ENCODE measurements at regions of chr4 and their contacts with region 1.

Region 1: GRCh38 chr4:111923786-111924185 is 221.5 kb upstream of the FAM241A start:
- DNase-seq: no peak
- H3K4me3 ChIP-seq: no peak overlapping the region
- H3K27ac ChIP-seq: no peak overlapping the region
- H3K4me1 ChIP-seq: no peaks in the 10 kb centered on the region
- H3K27me3 ChIP-seq: no peaks in the 10 kb centered on the region
- CTCF ChIP-seq: no peak
- POLR2A ChIP-seq: no peak

Region 2: GRCh38 chr4:111689214-111689613 is 234.6 kb before region 1 on chr4:
- intact Hi-C with region 1: loop called (anchors 10 kb)
- DNase-seq: peak; percentile 42 to 70
- H3K4me3 ChIP-seq: no peak overlapping the region
- H3K27ac ChIP-seq: peak overlapping the region in 1 of 2 donors; percentile 13
- H3K4me1 ChIP-seq: peaks cover 0 to 14% of the 10 kb centered on the region in 2 donors
- H3K27me3 ChIP-seq: no peaks in the 10 kb centered on the region
- CTCF ChIP-seq: no peak
- POLR2A ChIP-seq: no peak

Region 3: DNA sequence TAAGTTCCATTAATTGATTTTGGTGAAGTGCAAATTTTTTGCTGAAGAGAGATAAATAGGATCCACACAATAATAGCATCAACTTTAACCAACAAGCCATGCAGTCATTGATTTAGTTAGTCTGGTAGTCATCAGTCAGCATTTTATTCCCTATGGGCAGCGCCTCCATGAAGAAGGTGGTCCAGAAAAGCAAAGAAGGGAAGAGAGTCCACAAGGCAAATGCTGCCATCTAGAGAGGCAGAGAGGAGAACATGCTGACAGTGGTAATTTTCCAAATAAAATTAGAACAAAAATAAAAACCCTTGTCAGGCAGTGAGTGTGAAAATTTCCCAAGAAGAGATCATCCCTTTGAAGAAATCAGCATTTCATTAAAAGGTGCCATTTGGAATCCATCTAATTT is 145.2 kb before region 1 on chr4:
- intact Hi-C with region 1: no loop called
- DNase-seq: no peak
- H3K4me3 ChIP-seq: no peak overlapping the region
- H3K27ac ChIP-seq: no peak overlapping the region
- H3K4me1 ChIP-seq: no peaks in the 10 kb centered on the region
- H3K27me3 ChIP-seq: peaks cover 0 to 3% of the 10 kb centered on the region in 2 donors
- CTCF ChIP-seq: peak in 1 of 4 experiments; percentile 14
- POLR2A ChIP-seq: no peak

Region 4: GRCh38 chr4:112099701-112100297 is 176.0 kb after region 1 on chr4:
- intact Hi-C with region 1: no loop called
- DNase-seq: no peak
- H3K4me3 ChIP-seq: no peak overlapping the region
- H3K27ac ChIP-seq: no peak overlapping the region
- H3K4me1 ChIP-seq: no peaks in the 10 kb centered on the region
- H3K27me3 ChIP-seq: no peaks in the 10 kb centered on the region
- CTCF ChIP-seq: peak; percentile 53 to 62 (median 60)
- POLR2A ChIP-seq: no peak

Measured in uterus (tissue), 4 donors.